ENCODE measurements at regions of chr13 and their contacts with region 1.

Region 1: DNA sequence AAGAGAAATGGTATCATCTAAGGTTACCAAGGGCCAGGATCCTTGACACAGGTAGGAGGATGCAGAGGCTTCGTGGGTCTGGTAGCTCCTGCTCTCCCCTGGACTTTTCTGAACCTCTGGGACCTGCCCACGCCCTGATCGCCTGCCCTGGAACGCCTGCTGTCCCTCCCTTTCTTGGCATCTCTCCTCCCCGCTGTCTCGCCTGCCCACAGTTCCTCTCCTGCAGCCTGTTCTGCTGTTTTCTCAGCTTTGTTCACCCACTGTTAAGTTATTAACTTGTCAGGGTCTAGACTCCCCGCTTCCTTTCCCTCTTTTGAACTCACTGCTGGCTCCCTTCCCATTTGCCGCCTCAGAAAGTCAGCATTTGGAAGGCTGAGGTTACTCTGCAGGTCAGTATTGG is 19.8 kb downstream of the SERP2 start:
- DNase-seq: no peak
- H3K4me3 ChIP-seq: no peak overlapping the region
- H3K27ac ChIP-seq: no peak overlapping the region
- H3K4me1 ChIP-seq: no peaks in the 10 kb centered on the region
- H3K27me3 ChIP-seq: no peaks in the 10 kb centered on the region
- CTCF ChIP-seq: no peak

Region 2: GRCh38 chr13:44322928-44323327 is 70.5 kb before region 1 on chr13:
- CTCF ChIA-PET with region 1: no interaction called
- dilution Hi-C with region 1: loop called (anchors 5 kb)
- in situ Hi-C with region 1: no loop called
- intact Hi-C with region 1: no loop called
- DNase-seq: peak; percentile 35
- H3K4me3 ChIP-seq: no peak overlapping the region
- H3K27ac ChIP-seq: no peak overlapping the region
- H3K4me1 ChIP-seq: peaks cover 4% of the 10 kb centered on the region
- H3K27me3 ChIP-seq: no peaks in the 10 kb centered on the region
- CTCF ChIP-seq: no peak

Region 3: DNA sequence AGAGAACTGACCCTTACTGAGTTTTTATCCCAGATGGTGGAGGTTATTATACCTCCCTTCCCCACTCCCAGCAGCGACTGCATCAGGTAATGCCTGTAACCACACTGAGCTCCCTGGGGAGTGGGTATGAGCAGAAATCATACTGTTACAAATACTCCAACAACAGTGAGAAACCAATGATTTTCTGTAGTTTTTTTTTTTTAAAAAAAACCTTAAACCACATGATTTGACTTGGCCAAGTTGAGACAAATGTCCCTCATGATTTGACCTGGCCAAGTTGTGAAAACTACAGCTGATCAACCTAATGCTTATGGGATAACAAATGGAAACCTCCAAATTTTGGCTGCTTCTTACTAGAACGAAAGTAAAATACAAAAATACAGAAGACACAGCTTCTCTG is 52.9 kb before region 1 on chr13:
- CTCF ChIA-PET with region 1: no interaction called
- dilution Hi-C with region 1: no loop called
- in situ Hi-C with region 1: no loop called
- intact Hi-C with region 1: no loop called
- DNase-seq: no peak
- H3K4me3 ChIP-seq: no peak overlapping the region
- H3K27ac ChIP-seq: no peak overlapping the region
- H3K4me1 ChIP-seq: no peaks in the 10 kb centered on the region
- H3K27me3 ChIP-seq: no peaks in the 10 kb centered on the region
- CTCF ChIP-seq: no peak

Region 4: GRCh38 chr13:44458313-44458975 is 65.1 kb after region 1 on chr13:
- CTCF ChIA-PET with region 1: no interaction called
- dilution Hi-C with region 1: no loop called
- in situ Hi-C with region 1: no loop called
- intact Hi-C with region 1: no loop called
- DNase-seq: no peak
- H3K4me3 ChIP-seq: no peak overlapping the region
- H3K27ac ChIP-seq: no peak overlapping the region
- H3K4me1 ChIP-seq: no peaks in the 10 kb centered on the region
- H3K27me3 ChIP-seq: no peaks in the 10 kb centered on the region
- CTCF ChIP-seq: no peak

Measured in mammary epithelial cell (primary cell).